ENCODE measurements at regions of chr7 and their contacts with region 1.

Region 1: DNA sequence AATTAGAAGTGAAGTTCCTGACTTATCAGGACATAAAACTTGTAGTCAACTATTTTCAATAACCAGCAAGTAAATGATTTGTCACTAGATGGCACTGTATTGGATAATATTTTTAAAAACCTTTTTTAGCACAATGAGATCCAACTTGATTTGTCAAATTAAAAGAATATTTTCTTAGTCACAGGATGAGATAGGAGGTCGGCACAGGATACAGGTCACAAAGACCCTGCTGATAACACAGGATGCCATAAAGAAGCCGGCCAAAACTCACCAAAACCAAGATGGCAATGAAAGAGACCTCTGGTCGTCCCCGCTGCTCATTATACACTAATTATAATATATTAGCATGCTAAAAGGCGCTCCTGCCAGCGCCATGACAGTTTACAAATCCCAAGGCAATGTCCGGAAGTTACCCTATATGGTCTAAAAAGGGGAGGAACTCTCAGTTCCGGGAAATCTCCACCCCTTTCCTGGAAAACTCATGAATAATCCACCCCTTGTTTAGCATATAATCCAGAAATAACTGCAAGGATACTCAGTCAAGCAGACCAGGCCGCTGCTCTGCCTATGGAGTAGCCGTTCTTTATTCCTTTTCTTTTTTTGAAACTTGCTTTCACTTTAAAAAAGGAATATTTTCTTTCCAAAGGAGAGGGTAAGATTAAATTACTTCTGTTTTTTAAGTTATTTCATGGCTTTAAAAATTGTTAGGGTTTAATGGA is 255.7 kb upstream of the MKLN1 start:
- H3K4me3 Mint-ChIP-seq: no peak overlapping the region
- H3K27ac Mint-ChIP-seq: no peak overlapping the region
- H3K4me1 Mint-ChIP-seq: peaks cover 44% of the 10 kb centered on the region
- H3K27me3 Mint-ChIP-seq: no peaks in the 10 kb centered on the region

Region 2: DNA sequence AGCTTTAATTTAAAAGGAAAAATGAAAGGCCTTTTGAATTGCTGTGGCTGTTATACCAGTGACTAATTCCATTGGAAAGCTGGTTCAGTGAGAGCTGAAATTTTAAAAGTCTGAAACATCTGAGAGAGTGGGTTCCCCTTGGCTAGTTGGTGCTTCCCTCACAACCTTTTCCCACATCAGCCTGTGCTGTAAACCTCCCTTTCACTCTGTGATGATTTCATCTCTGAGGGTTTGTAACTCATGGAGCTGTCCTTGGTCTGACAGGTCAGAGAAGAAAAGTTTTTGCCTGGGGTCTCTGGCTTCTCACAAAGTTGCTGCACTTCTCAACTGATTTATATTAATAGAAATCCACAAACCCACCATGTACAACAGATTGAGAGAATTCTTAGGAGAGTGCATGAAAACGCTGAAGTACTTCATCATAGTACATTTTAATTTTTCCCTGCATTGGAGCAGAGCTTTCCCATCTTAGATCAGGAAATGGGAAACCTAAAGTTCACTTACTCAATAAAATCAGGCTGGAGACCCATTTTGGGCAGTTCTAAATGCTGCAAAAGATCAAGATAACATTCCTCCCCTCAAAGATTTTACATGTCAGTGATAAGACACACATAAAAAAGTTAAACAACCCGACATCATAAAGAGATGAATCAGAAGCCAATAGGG is 98.6 kb after region 1 on chr7:
- intact Hi-C with region 1: no loop called
- H3K4me3 Mint-ChIP-seq: no peak overlapping the region
- H3K27ac Mint-ChIP-seq: no peak overlapping the region
- H3K4me1 Mint-ChIP-seq: no peaks in the 10 kb centered on the region
- H3K27me3 Mint-ChIP-seq: peaks cover 14% of the 10 kb centered on the region

Region 3: GRCh38 chr7:131327626-131328376 is 255.9 kb after region 1 on chr7 and contains the start of gene MKLN1:
- intact Hi-C with region 1: loop called (anchors 10 kb)
- H3K4me3 Mint-ChIP-seq: peak within 1 kb of the TSS; percentile 96
- H3K27ac Mint-ChIP-seq: peak within 1 kb of the TSS; percentile 96
- H3K4me1 Mint-ChIP-seq: peaks cover 49% of the 10 kb centered on the region
- H3K27me3 Mint-ChIP-seq: no peaks in the 10 kb centered on the region

Region 4: DNA sequence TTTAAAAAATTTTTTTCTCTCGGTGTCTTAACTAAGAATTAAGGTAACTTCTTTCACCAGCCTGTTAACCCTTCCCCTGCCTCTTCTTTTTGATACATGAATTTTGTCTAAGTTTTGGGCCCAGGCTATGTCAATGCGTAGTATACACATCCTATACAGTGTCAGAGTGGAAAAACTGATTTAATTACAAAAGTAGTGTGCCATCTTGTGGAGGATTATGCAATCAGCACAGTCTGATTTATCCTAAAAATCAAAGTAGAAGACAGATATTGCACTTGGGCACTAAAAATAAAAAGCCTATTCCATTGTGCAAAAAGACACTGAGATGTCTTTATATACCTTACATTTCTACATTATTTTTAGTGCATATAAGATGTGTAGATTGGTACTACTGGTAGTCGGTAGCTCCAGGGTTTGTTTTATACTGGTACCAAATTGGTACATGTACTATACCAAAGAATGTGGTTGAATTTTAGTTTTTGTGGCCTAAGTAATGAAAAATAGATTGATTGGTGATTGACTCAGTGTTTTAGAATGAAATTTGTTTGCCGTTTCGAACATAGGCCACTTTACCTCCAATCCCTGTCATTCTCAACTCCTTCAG is 352.4 kb after region 1 on chr7:
- intact Hi-C with region 1: loop called (anchors 2 kb)
- H3K4me3 Mint-ChIP-seq: no peak overlapping the region
- H3K27ac Mint-ChIP-seq: no peak overlapping the region
- H3K4me1 Mint-ChIP-seq: no peaks in the 10 kb centered on the region
- H3K27me3 Mint-ChIP-seq: no peaks in the 10 kb centered on the region